Activated CD4-positive, alpha-beta memory T cell treated with anti-CD3 and anti-CD28 coated beads for 36 hours (primary cell): ENCODE measurements at regions of chr13 and their contacts with region 1.

Region 1: DNA sequence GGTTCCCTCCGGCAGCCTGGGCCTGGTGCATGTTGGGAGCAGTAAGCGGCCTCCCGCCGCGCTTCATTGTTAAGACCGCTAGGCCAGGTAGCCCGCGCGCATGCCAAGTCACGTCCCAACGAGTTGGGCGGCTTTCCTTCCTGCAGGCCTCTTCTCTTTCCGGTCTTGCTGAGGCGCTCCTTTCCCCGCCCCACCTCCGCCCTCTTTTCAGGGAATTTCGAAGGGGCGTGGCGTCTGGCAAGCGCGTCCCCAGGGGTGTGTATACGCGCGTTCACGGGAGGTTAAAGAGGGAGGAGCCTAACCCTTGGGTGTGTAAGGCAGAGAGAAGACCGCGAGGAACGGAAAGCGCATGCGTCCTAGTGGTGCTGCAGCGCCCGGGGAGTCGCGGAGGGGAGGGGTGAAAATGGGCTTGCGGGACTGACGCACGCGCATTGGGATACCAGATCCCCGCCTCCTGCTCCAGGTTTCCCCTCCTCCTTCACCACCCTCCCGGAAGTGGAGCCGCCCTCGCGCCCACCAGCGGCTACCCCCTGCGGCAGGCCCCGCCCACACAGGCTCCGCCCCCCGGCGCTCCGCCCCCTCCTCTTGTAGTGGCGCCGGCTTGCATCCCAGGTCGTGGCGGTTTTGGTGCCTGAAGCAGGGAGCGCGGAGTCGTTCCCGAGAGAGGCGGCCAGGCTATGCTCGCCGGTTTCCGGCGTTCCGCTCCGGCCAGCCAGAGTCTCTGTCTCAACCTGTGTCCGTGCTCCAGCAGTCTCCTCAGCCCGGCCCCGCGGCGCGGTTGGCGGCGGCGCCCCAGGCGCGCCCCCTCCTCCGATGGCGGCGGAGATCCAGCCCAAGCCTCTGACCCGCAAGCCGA is at the start of gene WDFY2:
- DNase-seq: peak; percentile 99
- H3K4me3 Mint-ChIP-seq: peak within 1 kb of the TSS; percentile 87
- H3K27ac Mint-ChIP-seq: peak within 1 kb of the TSS; percentile 94
- H3K4me1 Mint-ChIP-seq: peaks cover 35% of the 10 kb centered on the region
- H3K27me3 Mint-ChIP-seq: no peaks in the 10 kb centered on the region
- total RNA-seq, gene WDFY2: 9.3 to 11.2 TPM

Region 2: GRCh38 chr13:51502153-51502651 is 81.9 kb before region 1 on chr13:
- CTCF ChIA-PET with region 1: no interaction called
- POLR2A ChIA-PET with region 1: interaction called, 3 read pairs
- intact Hi-C with region 1: loop called (anchors 1 kb)
- DNase-seq: peak; percentile 63
- H3K4me3 Mint-ChIP-seq: no peak overlapping the region
- H3K27ac Mint-ChIP-seq: no peak overlapping the region
- H3K4me1 Mint-ChIP-seq: peaks cover 31% of the 10 kb centered on the region
- H3K27me3 Mint-ChIP-seq: peaks cover 11% of the 10 kb centered on the region

Region 3: GRCh38 chr13:51614350-51614786 is 30.3 kb after region 1 on chr13:
- CTCF ChIA-PET with region 1: interaction called, 7 read pairs
- POLR2A ChIA-PET with region 1: interaction called, 8 read pairs
- intact Hi-C with region 1: loop called (anchors 1 kb)
- DNase-seq: peak; percentile 66
- H3K4me3 Mint-ChIP-seq: peak overlapping the region; percentile 75
- H3K27ac Mint-ChIP-seq: peak overlapping the region; percentile 93
- H3K4me1 Mint-ChIP-seq: peaks cover 22% of the 10 kb centered on the region
- H3K27me3 Mint-ChIP-seq: no peaks in the 10 kb centered on the region

Region 4: GRCh38 chr13:51619614-51620013 is 35.5 kb after region 1 on chr13:
- CTCF ChIA-PET with region 1: interaction called, 7 read pairs
- POLR2A ChIA-PET with region 1: interaction called, 8 read pairs
- intact Hi-C with region 1: loop called (anchors 1 kb)
- DNase-seq: peak; percentile 38
- H3K4me3 Mint-ChIP-seq: no peak overlapping the region
- H3K27ac Mint-ChIP-seq: peak overlapping the region; percentile 50
- H3K4me1 Mint-ChIP-seq: peaks cover 44% of the 10 kb centered on the region
- H3K27me3 Mint-ChIP-seq: no peaks in the 10 kb centered on the region

Region 5: GRCh38 chr13:51645154-51645650 is 61.1 kb after region 1 on chr13:
- CTCF ChIA-PET with region 1: interaction called, 3 read pairs
- POLR2A ChIA-PET with region 1: interaction called, 4 read pairs
- intact Hi-C with region 1: loop called (anchors 1 kb)
- DNase-seq: peak; percentile 32
- H3K4me3 Mint-ChIP-seq: peak overlapping the region; percentile 38
- H3K27ac Mint-ChIP-seq: peak overlapping the region; percentile 68
- H3K4me1 Mint-ChIP-seq: peaks cover 46% of the 10 kb centered on the region
- H3K27me3 Mint-ChIP-seq: no peaks in the 10 kb centered on the region

Region 6: DNA sequence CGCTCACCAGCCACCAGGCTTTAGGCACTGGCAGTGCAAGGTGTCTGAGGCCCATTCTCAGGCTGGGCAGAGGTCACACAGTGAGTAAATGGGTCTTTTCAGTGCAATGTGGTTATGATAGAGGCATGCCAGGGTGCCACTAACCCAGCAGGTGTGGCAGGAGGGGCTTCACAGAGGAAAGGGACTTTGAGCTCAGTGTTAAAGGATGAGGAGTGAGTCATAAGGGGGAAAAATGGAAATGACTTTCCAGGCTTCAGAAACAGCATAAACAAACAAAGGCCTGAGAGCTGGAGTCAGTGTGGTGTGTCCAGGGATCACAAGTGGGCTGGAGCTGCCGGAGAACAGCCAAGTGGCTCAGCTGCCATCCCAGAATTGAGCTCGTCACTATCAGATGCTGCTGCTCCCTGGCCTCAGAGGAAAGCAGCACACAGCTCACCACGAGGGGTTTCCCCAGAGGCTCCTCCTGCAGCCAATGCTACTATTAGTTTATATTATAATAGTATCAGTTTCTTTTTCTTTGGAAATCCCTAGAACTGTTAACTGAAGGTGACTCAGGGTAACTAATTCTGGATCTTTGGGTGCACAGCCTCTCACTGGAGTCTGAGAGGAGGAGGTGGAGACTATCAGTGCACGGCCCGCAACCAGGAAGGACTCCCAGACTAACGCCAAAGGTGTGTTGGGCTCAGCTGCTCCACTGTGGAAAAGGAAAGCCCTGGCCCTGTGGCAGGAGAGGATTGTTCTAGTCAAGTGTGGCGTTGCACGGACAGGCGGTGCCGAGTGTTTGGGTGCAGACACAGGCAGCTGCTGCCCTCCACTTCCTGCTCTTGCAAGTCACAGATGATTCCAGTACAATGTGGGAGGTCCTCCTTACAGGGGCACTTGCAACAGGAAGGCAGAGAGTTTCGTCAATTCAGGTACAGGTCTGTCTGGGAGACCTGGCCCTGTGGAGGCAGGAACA is 180.4 kb after region 1 on chr13:
- CTCF ChIA-PET with region 1: interaction called, 6 read pairs
- POLR2A ChIA-PET with region 1: no interaction called
- intact Hi-C with region 1: loop called (anchors 1 kb)
- DNase-seq: peak; percentile 81
- H3K4me3 Mint-ChIP-seq: peak overlapping the region; percentile 77
- H3K27ac Mint-ChIP-seq: peak overlapping the region; percentile 95
- H3K4me1 Mint-ChIP-seq: peaks cover 42% of the 10 kb centered on the region
- H3K27me3 Mint-ChIP-seq: no peaks in the 10 kb centered on the region

Region 7: DNA sequence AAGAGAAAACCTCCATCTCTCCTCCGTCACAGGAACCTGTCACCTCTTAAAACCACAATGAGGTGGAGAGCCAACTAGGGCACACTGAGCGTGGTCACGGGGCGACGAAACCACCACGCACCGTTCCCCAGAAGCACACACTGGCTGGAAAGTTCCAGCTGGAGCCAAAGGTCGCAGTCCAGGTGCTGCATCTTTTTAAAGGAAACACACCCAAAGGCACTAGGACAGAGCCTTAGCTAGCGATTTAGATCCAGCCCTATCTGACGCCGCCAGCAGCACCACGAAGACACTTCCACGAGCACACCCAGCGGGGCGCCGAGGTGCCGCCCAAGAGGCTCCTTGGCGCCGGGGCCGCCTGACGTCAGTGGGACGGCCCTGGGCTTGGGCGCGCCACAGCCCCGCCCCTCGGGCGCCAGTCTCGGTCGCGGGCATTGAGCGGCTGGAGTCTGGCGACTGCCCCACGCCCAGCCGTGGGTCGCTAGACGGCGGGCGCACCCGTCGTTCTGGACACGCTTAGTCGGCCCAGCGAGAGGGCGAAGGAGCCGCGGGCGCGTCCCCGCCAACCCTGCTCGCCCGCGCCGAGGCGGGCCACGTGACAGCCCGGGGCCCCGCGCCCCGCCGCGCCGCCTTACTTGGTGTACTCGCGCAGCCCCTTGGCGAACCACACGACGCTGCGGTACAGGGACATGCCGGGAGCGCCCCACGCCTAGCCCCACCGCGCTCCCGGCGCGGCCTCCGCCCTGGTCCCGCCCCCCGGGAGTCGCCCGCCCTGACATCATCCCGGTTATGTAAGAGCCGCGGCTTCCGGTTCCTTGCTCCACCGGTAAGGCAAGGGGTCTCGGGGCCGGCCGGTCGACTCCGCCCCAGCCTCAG is 219.6 kb after region 1 on chr13 and contains the start of gene DHRS12:
- CTCF ChIA-PET with region 1: interaction called, 33 read pairs
- POLR2A ChIA-PET with region 1: interaction called, 4 read pairs
- intact Hi-C with region 1: loop called (anchors 1 kb)
- DNase-seq: peak; percentile 89
- H3K4me3 Mint-ChIP-seq: peak within 1 kb of the TSS; percentile 94
- H3K27ac Mint-ChIP-seq: peak within 1 kb of the TSS; percentile 100
- H3K4me1 Mint-ChIP-seq: peaks cover 58% of the 10 kb centered on the region
- H3K27me3 Mint-ChIP-seq: peaks cover 2% of the 10 kb centered on the region
- total RNA-seq, gene DHRS12: 6.7 to 7.0 TPM